Astrocyte of the cerebellum (primary cell): ENCODE measurements at regions of chr15 and their contacts with region 1.

Region 1: DNA sequence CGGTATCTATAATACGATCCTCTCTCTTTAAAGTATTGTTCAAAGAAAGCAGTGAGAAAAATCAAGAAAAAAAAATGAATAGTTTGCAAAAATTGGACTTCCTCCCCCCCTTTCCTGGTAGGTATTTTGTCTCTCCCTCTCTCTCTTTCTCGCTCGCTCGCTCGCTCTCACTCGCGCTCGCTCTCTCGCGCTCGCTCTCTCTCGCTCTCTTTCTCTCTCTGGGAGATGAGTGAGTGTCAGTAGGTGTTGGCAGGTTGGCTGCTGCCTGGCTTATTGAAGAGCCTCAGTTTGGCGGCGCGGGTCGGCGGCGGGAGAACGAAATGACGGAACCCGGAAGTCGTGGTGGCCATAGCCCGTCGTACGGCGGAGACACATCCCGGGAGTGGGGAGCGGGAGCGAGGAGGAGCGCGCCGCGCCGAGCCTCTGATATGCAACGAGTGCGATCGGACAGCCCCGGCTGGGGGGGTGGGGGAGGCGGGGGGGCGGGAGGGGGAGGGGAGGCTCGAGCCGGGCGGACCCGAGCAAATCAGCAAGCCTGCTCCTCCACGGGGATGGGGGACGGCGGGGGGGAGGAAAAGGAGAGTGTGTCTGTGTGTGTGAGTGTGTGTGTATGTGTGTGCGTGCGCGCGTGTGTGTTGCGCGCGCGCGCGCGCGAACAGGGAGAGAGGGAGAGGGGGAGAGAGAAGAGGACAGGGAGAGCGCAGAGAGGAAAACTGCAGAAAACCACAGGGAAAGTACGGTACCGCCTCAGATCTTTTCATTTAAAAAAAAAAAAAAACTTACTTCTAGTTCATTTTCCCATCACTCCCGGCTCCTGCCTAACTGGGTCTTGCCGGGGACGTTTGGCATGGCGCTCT is at the start of gene MEIS2:
- DNase-seq: peak; percentile 84
- H3K4me3 ChIP-seq: peak within 1 kb of the TSS; percentile 88
- CTCF ChIP-seq: no peak

Region 2: GRCh38 chr15:36883713-36884517 is 216.4 kb before region 1 on chr15:
- in situ Hi-C with region 1: loop called (anchors 25 kb)
- DNase-seq: peak; percentile 85
- H3K4me3 ChIP-seq: peak overlapping the region; percentile 33
- CTCF ChIP-seq: peak; percentile 84

Region 3: GRCh38 chr15:36996538-36997181 is 103.7 kb before region 1 on chr15:
- in situ Hi-C with region 1: no loop called
- DNase-seq: no peak
- H3K4me3 ChIP-seq: no peak overlapping the region
- CTCF ChIP-seq: no peak